ENCODE measurements at regions of chr10 and their contacts with region 1.

Region 1: GRCh38 chr10:92222603-92223275 is 68.1 kb downstream of the CPEB3 start:
- DNase-seq: no peak

Region 2: DNA sequence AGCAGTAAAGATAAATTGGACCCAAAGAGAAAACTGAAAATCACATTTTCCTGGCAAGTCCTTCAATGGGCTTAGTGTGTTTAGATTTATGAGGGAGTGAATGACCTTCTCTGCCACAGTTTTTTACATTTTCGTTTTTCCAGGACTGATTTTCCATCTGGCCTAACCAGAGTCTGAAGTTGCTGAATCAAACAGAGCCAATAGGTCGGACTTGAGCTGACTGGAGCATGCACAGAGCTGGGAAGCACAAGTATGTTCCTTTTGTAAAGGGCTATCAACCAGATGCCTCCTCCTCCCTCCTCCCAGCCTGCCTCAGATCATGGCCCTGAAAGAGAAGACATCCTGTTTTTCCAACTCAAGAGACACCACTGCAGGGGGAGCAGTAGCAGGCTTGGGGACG is 1175.9 kb before region 1 on chr10:
- intact Hi-C with region 1: loop called in 1 of 2 experiments (anchors 5 kb)
- DNase-seq: no peak

Region 3: GRCh38 chr10:92278996-92279696 is 56.4 kb after region 1 on chr10:
- intact Hi-C with region 1: no loop called
- DNase-seq: no peak